GM23248 (cell line): ENCODE measurements at regions of chr2 and their contacts with region 1.

Region 1: DNA sequence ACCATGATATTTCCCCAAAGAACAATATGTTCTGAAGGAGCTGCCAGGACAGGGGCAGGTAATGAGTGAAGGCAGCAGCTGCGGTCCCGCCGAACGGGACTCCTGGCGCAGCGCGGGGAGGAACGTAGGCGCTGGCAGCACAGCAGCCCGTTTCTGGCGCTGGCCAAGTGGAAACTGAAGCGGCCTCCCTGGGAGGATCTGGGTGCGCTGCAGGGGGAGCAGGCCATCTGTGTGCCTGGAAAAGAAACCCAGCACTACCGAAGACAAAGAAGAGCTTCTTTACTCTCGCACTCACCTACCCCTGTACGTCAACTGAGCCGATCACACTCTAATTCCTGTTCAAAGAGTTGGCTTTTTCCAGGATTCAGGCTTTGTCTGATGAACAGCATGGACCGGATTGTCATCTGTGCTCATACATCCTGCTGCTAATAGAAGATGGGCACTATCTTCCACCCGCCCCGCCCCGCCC is 11.8 kb downstream of the G6PC2 start:
- DNase-seq: peak; percentile 56
- H3K4me3 ChIP-seq: peak overlapping the region; percentile 64
- H3K27ac ChIP-seq: no peak overlapping the region
- H3K4me1 ChIP-seq: no peaks in the 10 kb centered on the region
- H3K27me3 ChIP-seq: peaks cover 63% of the 10 kb centered on the region

Region 2: GRCh38 chr2:168773719-168774521 is 139.0 kb before region 1 on chr2:
- in situ Hi-C with region 1: loop called (anchors 10 kb)
- DNase-seq: peak; percentile 82
- H3K4me3 ChIP-seq: no peak overlapping the region
- H3K27ac ChIP-seq: no peak overlapping the region
- H3K4me1 ChIP-seq: no peaks in the 10 kb centered on the region
- H3K27me3 ChIP-seq: no peaks in the 10 kb centered on the region

Region 3: GRCh38 chr2:168798076-168798887 is 114.7 kb before region 1 on chr2:
- in situ Hi-C with region 1: loop called (anchors 10 kb)
- DNase-seq: no peak
- H3K4me3 ChIP-seq: no peak overlapping the region
- H3K27ac ChIP-seq: no peak overlapping the region
- H3K4me1 ChIP-seq: peaks cover 10% of the 10 kb centered on the region
- H3K27me3 ChIP-seq: no peaks in the 10 kb centered on the region

Region 4: GRCh38 chr2:168819050-168819715 is 93.8 kb before region 1 on chr2:
- in situ Hi-C with region 1: no loop called
- DNase-seq: no peak
- H3K4me3 ChIP-seq: no peak overlapping the region
- H3K27ac ChIP-seq: no peak overlapping the region
- H3K4me1 ChIP-seq: peaks cover 15% of the 10 kb centered on the region
- H3K27me3 ChIP-seq: no peaks in the 10 kb centered on the region